ENCODE measurements at regions of chr13 and their contacts with region 1.

Region 1: DNA sequence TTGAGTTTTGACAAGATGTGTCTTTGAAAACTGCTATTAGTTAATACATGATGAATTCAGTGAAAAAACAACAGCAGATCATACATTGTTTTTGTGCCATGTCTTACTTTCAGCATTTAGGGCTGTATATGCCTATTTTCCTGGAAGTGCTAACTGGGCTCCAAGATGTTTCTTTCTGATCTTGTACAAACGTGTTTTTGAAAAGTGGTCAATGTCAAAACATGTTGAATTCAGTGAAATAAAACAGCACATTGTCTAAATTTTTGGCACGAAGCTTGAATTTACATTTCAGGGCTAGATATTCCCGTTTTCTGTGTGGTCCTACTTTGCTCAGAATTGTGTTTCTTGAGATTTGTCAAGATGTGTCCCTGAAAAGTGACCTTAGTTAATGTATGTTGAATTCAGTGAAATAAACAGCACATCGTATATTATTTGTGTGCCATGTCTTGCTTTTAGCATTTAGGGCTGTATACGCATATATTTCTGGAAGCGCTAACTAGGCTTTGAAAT is 14.7 kb upstream of the PARP4 start:
- DNase-seq: no peak
- ATAC-seq: no peak
- H3K4me3 ChIP-seq: no peak overlapping the region
- H3K4me3 Mint-ChIP-seq: no peak overlapping the region
- H3K27ac ChIP-seq: no peak overlapping the region
- H3K27ac Mint-ChIP-seq: no peak overlapping the region
- H3K4me1 ChIP-seq: no peaks in the 10 kb centered on the region
- H3K4me1 Mint-ChIP-seq: no peaks in the 10 kb centered on the region
- H3K27me3 ChIP-seq: peaks cover 0 to 10% of the 10 kb centered on the region in 2 experiments
- H3K27me3 Mint-ChIP-seq: peaks cover 12 to 33% of the 10 kb centered on the region in 2 donors

Region 2: GRCh38 chr13:24512197-24512907 is 15.0 kb before region 1 on chr13 and contains the start of gene PARP4:
- CTCF ChIA-PET with region 1: no interaction called
- POLR2A ChIA-PET with region 1: interaction called in 1 of 2 experiments, 10 read pairs
- DNase-seq: peak; percentile 32 to 78 (median 56)
- ATAC-seq: peak; percentile 82 to 87 (median 85)
- H3K4me3 ChIP-seq: peak within 1 kb of the TSS; percentile 92 to 96
- H3K4me3 Mint-ChIP-seq: peak within 1 kb of the TSS; percentile 87 to 98 (median 93)
- H3K27ac ChIP-seq: peak within 1 kb of the TSS; percentile 79
- H3K27ac Mint-ChIP-seq: peak within 1 kb of the TSS; percentile 88 to 96
- H3K4me1 ChIP-seq: peaks cover 5 to 17% of the 10 kb centered on the region in 2 experiments
- H3K4me1 Mint-ChIP-seq: peaks cover 37 to 45% (median 41%) of the 10 kb centered on the region in 3 donors
- H3K27me3 ChIP-seq: no peaks in the 10 kb centered on the region
- H3K27me3 Mint-ChIP-seq: no peaks in the 10 kb centered on the region
- total RNA-seq, gene PARP4: 50.3 to 77.7 (median 58.2) TPM

Measured in T-cell (primary cell).